Left cardiac atrium (tissue), 4 donors: ENCODE measurements at regions of chr9 and their contacts with region 1.

Region 1: GRCh38 chr9:119968836-119969707 is 599.8 kb upstream of the BRINP1 start:
- DNase-seq: peak; percentile 81
- ATAC-seq: peak; percentile 93 to 96

Region 2: GRCh38 chr9:119370816-119371215 is 598.3 kb before region 1 on chr9:
- intact Hi-C with region 1: loop called in 1 of 2 experiments (anchors 10 kb)
- DNase-seq: peak; percentile 60
- ATAC-seq: peak in 1 of 2 donors; percentile 36

Region 3: DNA sequence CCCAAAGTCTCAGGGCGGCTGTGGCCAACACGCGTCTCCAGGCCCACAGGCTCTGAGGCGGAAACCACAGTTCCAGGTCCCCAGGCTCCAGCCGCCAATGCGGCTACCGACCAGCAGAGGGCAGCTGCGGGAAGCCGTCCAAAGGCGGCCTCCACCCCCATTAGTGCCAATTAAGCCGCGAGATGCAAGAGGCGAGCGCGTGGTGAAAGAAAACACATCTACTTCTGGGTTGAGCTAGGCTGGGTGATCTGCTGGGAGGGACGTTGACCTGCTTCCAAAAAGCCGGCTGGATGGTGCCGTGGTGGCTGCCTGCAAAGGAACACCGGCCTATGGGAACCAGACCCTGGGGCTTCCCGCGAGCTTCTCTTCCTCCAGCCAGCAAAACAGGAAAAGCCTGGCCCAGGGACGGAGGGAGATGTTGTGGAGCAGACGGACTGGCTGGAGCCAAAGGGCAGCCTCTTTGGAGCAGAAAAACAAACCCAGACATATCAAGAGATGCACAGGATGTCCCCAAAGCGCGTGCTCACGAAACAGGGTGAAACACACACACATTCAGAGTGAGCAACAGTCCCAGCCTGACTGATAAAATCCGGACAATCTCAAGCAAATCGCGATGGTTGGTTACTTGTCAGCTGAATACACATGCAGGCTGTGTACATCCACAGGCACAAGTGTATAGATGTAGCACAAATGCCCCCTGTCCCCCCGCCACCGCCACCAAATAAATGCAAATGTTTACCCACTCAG is 412.8 kb before region 1 on chr9:
- intact Hi-C with region 1: loop called (anchors 2 to 10 kb)
- DNase-seq: peak; percentile 84
- ATAC-seq: peak; percentile 89 to 93

Region 4: DNA sequence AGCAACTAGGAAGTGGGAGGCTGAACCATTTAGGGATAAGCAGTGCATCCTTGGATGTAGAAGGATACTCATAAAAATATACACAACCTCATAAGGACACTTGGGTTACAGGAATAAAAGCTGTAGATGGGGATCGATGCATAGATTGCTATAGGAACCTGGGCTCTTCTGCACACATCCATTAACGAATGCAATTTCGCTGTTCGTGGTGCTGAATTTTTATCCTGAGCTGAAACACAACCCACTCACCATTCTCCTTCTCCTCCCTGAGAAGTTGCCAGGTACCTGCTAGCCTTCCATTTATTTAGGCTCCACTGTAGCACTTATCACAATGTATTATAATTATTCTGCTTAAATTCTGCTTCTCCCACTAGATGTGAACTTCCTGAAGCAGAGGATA is 279.2 kb before region 1 on chr9:
- intact Hi-C with region 1: no loop called
- DNase-seq: no peak
- ATAC-seq: no peak